ENCODE measurements at regions of chrX and their contacts with region 1.

Region 1: GRCh38 chrX:19887911-19888879 is 795 bp upstream of the SH3KBP1 start:
- DNase-seq: peak; percentile 72
- ATAC-seq: peak; percentile 31
- H3K4me3 ChIP-seq: peak overlapping the region in 4 of 5 experiments; percentile 55 to 64 (median 60)
- H3K4me3 Mint-ChIP-seq: peak overlapping the region; percentile 77
- H3K27ac ChIP-seq: peak overlapping the region; percentile 68 to 76
- H3K27ac Mint-ChIP-seq: peak overlapping the region; percentile 90
- H3K4me1 ChIP-seq: peaks cover 18 to 39% of the 10 kb centered on the region in 2 donors
- H3K4me1 Mint-ChIP-seq: peaks cover 34% of the 10 kb centered on the region
- H3K27me3 ChIP-seq: no peaks in the 10 kb centered on the region
- H3K27me3 Mint-ChIP-seq: no peaks in the 10 kb centered on the region
- CTCF ChIP-seq: peak; percentile 29

Region 2: DNA sequence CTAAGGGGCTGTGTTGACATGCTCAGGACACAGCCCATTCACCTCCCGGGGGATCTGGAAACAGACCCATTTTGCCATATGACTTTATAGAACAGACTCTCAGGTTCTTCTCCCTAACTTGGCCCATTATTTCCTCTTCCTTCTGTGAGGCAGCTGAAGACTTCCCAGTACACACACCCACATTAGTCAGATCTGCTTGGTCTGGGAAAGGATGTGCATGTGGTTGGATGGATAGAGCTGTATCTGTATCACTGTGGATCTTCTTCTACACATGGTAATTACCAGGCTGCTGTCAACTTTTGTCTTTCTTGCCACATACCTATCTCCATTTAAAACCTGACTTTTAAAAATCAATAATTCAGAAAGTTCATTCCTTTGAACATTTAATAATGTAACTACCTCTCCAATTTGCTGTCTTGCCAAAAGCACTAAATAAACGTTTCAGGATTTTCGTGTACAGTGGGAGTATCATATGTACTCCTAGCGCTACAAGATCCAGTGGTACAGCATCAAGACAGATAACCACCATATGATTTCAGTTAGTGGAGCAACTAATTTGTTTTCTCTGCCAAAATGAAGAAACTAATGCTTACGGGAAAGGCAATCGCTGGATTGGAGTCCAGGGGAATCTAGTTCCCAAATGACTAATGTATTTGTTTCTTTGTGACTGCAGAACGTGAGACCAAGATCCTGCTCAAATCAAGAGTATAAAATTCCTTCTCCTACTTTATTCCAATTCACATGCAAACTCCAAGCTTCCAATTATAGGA is 238.8 kb before region 1 on chrX:
- CTCF ChIA-PET with region 1: no interaction called
- POLR2A ChIA-PET with region 1: no interaction called
- intact Hi-C with region 1: no loop called
- DNase-seq: no peak
- ATAC-seq: no peak
- H3K4me3 ChIP-seq: no peak overlapping the region
- H3K4me3 Mint-ChIP-seq: no peak overlapping the region
- H3K27ac ChIP-seq: no peak overlapping the region
- H3K27ac Mint-ChIP-seq: no peak overlapping the region
- H3K4me1 ChIP-seq: no peaks in the 10 kb centered on the region
- H3K4me1 Mint-ChIP-seq: peaks cover 10% of the 10 kb centered on the region
- H3K27me3 ChIP-seq: no peaks in the 10 kb centered on the region
- H3K27me3 Mint-ChIP-seq: no peaks in the 10 kb centered on the region
- CTCF ChIP-seq: no peak

Region 3: GRCh38 chrX:19682712-19683331 is 205.4 kb before region 1 on chrX:
- CTCF ChIA-PET with region 1: no interaction called
- POLR2A ChIA-PET with region 1: interaction called, 4 read pairs
- intact Hi-C with region 1: loop called (anchors 5 kb)
- DNase-seq: peak; percentile 74
- ATAC-seq: peak; percentile 85
- H3K4me3 ChIP-seq: no peak overlapping the region
- H3K4me3 Mint-ChIP-seq: peak overlapping the region; percentile 62
- H3K27ac ChIP-seq: peak overlapping the region in 1 of 2 donors; percentile 62
- H3K27ac Mint-ChIP-seq: peak overlapping the region; percentile 92
- H3K4me1 ChIP-seq: peaks cover 27 to 40% of the 10 kb centered on the region in 2 donors
- H3K4me1 Mint-ChIP-seq: peaks cover 71% of the 10 kb centered on the region
- H3K27me3 ChIP-seq: no peaks in the 10 kb centered on the region
- H3K27me3 Mint-ChIP-seq: no peaks in the 10 kb centered on the region
- CTCF ChIP-seq: no peak

Region 4: DNA sequence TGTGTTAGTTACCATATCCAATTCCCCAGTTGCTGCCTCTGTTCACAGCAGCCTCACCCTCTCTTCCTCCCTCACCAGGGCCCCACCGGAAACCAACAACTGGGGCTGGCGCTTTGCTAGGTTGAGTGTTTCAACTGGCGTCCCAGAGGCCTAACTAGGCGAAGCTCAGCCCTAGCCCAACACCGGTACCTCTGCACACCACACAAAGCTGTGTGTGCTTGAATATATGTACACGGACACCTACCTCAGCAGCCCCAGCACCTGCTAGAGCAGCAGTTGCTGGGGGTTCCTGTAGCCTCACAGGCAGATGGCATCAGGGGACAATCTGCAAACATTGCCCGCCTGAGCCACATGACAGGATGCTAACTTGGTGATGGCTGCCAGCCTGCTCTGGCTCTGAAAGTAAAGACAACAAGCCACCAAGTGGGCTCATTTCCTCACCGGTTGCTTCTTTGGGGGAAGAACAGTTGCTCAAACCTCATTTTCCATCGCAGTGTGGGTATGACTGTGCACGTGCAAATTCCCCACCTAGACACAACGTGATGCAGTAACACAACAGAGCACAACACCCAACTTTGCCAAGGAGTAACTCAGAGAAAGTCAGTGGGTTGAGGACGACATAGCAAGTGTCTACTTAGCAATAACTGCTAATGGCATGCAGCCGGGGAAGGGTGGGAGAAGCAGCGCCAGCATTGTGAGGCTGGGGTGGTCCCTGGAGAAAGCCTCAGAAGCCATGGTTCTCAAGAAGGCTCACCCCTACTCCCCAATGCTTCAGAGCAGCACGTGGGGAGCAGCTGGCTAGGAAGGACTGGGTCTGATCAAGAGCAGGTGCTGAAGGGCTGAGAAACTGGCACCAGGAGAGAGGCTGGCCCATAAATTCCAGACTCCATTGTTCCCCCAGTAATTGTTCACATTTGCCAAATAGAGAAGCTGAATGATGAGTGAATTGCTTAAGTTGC is 140.3 kb before region 1 on chrX:
- CTCF ChIA-PET with region 1: interaction called, 11 read pairs
- POLR2A ChIA-PET with region 1: no interaction called
- intact Hi-C with region 1: loop called (anchors 2 kb)
- DNase-seq: peak; percentile 77
- ATAC-seq: peak; percentile 68
- H3K4me3 ChIP-seq: no peak overlapping the region
- H3K4me3 Mint-ChIP-seq: peak overlapping the region; percentile 67
- H3K27ac ChIP-seq: peak overlapping the region; percentile 85 to 87
- H3K27ac Mint-ChIP-seq: peak overlapping the region; percentile 98
- H3K4me1 ChIP-seq: peaks cover 64 to 90% of the 10 kb centered on the region in 2 donors
- H3K4me1 Mint-ChIP-seq: peaks cover 91% of the 10 kb centered on the region
- H3K27me3 ChIP-seq: no peaks in the 10 kb centered on the region
- H3K27me3 Mint-ChIP-seq: no peaks in the 10 kb centered on the region
- CTCF ChIP-seq: no peak

Region 5: GRCh38 chrX:19863212-19863856 is 24.9 kb before region 1 on chrX:
- CTCF ChIA-PET with region 1: interaction called, 3 read pairs
- POLR2A ChIA-PET with region 1: interaction called, 4 read pairs
- intact Hi-C with region 1: loop called (anchors 2 kb)
- DNase-seq: no peak
- ATAC-seq: peak; percentile 69
- H3K4me3 ChIP-seq: peak overlapping the region in 4 of 5 experiments; percentile 0 to 37 (median 20)
- H3K4me3 Mint-ChIP-seq: peak overlapping the region; percentile 90
- H3K27ac ChIP-seq: peak overlapping the region; percentile 80 to 84
- H3K27ac Mint-ChIP-seq: peak overlapping the region; percentile 98
- H3K4me1 ChIP-seq: peaks cover 80 to 83% of the 10 kb centered on the region in 2 donors
- H3K4me1 Mint-ChIP-seq: peaks cover 86% of the 10 kb centered on the region
- H3K27me3 ChIP-seq: no peaks in the 10 kb centered on the region
- H3K27me3 Mint-ChIP-seq: no peaks in the 10 kb centered on the region
- CTCF ChIP-seq: no peak